H1 (cell line): ENCODE measurements at regions of chr9 and their contacts with region 1.

Region 1: DNA sequence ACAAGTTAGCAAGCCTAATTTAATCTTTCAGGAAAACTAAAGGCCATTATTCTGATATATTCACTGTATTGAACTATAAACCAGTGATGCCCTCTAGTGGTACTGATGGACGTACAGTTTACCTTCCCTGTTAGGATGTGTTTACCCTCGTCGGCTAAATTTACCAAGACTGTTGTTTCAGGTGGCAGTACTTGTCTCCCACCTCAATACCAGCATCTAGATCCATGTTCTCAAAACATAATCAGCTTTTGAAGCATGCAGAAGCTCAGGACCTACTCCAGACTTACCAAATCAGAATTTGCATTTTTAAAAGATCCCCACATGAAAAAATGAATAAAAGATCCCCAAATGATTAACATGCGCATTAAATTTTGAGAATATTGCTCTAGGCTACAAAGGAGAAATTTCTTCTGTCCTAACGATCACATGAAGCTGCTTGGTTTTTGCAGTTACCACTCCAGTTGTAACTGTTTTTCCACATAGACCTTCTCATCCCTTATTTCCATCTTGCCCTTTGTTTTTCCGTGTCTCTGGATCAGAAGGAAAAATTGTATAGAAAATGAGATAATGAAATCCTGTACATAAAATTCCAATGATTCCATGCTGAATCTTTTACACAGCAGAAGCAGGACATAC is 3.2 kb upstream of the BAAT start:
- DNase-seq: no peak
- H3K4me3 ChIP-seq: no peak overlapping the region
- H3K27ac ChIP-seq: no peak overlapping the region
- H3K4me1 ChIP-seq: peaks cover 0 to 3% (median 0%) of the 10 kb centered on the region in 4 experiments; a peak in 3 of 7 replicates
- H3K27me3 ChIP-seq: no peaks in the 10 kb centered on the region
- CTCF ChIP-seq: peak in 2 of 3 experiments; percentile 64 to 77; a peak in 3 of 4 replicates
- EP300 ChIP-seq: no peak
- POLR2A ChIP-seq: no peak
- RAD21 ChIP-seq: peak; percentile 61 to 62

Region 2: GRCh38 chr9:101326501-101326900 is 61.5 kb before region 1 on chr9:
- CTCF ChIA-PET with region 1: interaction called, 17 read pairs
- POLR2A ChIA-PET with region 1: no interaction called
- DNase-seq: no peak
- H3K4me3 ChIP-seq: no peak overlapping the region
- H3K27ac ChIP-seq: no peak overlapping the region
- H3K4me1 ChIP-seq: peaks cover 0 to 6% (median 5%) of the 10 kb centered on the region in 4 experiments; a peak in 5 of 7 replicates
- H3K27me3 ChIP-seq: no peaks in the 10 kb centered on the region
- CTCF ChIP-seq: no peak
- EP300 ChIP-seq: no peak
- POLR2A ChIP-seq: no peak
- RAD21 ChIP-seq: no peak

Region 3: DNA sequence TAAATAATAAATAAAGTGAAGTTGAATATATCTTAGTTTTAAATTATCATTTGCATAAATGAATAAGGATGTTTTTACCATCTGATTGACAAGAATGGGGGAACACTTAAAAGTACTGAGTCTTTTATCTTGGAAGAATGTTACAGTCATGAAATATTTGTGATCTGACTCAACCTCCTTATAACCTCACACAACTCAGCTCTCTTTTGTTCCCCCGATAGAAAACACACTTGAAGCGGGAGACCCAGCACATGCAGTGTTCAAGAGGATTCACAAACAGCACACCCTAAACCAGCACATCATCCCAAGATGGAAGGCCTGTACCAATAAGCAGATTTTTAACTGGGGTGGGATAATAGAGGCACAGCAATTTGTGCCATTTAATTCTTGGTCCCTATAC is 18.7 kb before region 1 on chr9:
- CTCF ChIA-PET with region 1: interaction called, 21 read pairs
- POLR2A ChIA-PET with region 1: interaction called, 4 read pairs
- DNase-seq: no peak
- H3K4me3 ChIP-seq: no peak overlapping the region
- H3K27ac ChIP-seq: no peak overlapping the region
- H3K4me1 ChIP-seq: no peaks in the 10 kb centered on the region; a peak in 1 of 7 replicates
- H3K27me3 ChIP-seq: no peaks in the 10 kb centered on the region
- CTCF ChIP-seq: no peak
- EP300 ChIP-seq: no peak
- POLR2A ChIP-seq: no peak
- RAD21 ChIP-seq: no peak

Region 4: GRCh38 chr9:101398068-101398929 is 10.3 kb after region 1 on chr9 and contains the starts of genes MRPL50 and ZNF189:
- CTCF ChIA-PET with region 1: interaction called, 16 read pairs
- POLR2A ChIA-PET with region 1: interaction called, 15 read pairs
- DNase-seq: peak; percentile 89 to 94
- H3K4me3 ChIP-seq: peak within 1 kb of the TSS; percentile 84 to 93 (median 87)
- H3K27ac ChIP-seq: peak within 1 kb of the TSS; percentile 89
- H3K4me1 ChIP-seq: peaks cover 0 to 4% (median 3%) of the 10 kb centered on the region in 4 experiments; a peak in 3 of 7 replicates
- H3K27me3 ChIP-seq: no peaks in the 10 kb centered on the region
- CTCF ChIP-seq: no peak
- EP300 ChIP-seq: no peak
- POLR2A ChIP-seq: peak; percentile 97 to 98
- RAD21 ChIP-seq: no peak
- total RNA-seq, gene MRPL50: 24.0 and 25.1 TPM in 2 replicates
- total RNA-seq, gene ZNF189: 11.9 and 12.3 TPM in 2 replicates

Region 5: DNA sequence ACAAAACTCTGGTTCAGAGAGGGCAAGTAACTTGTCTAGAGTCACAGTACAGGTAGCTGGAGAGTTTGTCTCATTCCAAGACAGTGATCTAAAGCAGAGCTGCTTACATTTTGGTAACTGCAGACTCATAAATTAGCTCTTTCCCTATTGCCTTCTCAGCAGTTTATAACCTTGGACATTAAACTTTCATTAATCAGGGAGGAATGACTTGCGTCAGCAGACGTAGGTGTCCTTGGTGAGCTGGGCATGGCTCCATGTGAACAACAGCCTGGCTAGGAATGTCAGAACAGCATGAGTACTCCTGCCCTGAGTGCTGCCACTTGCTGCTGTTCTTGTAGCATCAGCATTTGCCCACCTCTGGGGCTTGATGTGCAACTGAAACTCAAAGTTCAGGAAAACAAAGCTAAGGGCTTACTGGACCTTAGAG is 49.8 kb after region 1 on chr9:
- CTCF ChIA-PET with region 1: no interaction called
- POLR2A ChIA-PET with region 1: no interaction called
- DNase-seq: no peak
- H3K4me3 ChIP-seq: no peak overlapping the region
- H3K27ac ChIP-seq: no peak overlapping the region
- H3K4me1 ChIP-seq: no peaks in the 10 kb centered on the region
- H3K27me3 ChIP-seq: no peaks in the 10 kb centered on the region
- CTCF ChIP-seq: no peak
- EP300 ChIP-seq: no peak
- POLR2A ChIP-seq: no peak
- RAD21 ChIP-seq: no peak

Region 6: DNA sequence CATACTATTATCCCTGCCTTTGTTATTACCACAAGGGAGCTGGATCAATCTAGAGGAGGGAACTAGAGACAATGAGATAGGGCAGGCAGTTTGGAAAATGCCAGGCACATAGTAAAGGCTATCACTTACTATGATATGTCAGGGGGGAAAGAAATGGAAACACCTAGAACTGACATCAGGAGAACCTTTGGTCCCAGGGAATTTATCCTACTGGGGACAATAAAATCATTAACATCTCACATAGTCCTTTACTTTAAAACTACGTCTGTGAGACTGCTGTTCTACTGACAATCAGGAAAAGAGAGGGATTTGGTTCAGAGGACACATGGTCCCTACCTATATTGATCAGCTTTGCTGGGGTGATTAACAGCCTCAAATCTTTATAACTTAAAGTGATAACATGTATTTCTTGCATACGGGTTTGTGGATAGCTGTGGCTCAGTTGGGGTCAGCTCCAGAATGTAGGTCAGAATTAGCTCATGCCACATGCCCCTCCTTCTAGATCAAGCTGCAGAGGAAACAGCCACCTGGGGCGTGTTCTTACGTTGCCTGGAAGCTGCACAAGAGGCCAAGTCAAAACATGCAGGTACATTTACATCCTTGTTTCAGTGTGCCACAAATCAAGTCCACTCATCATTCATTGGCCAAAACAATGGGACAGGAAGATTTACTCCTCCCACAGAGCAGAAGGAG is 91.5 kb after region 1 on chr9:
- CTCF ChIA-PET with region 1: no interaction called
- POLR2A ChIA-PET with region 1: no interaction called
- DNase-seq: no peak
- H3K4me3 ChIP-seq: no peak overlapping the region
- H3K27ac ChIP-seq: no peak overlapping the region
- H3K4me1 ChIP-seq: peaks cover 0 to 4% (median 1%) of the 10 kb centered on the region in 4 experiments; a peak in 2 of 7 replicates
- H3K27me3 ChIP-seq: no peaks in the 10 kb centered on the region
- CTCF ChIP-seq: no peak
- EP300 ChIP-seq: no peak
- POLR2A ChIP-seq: no peak
- RAD21 ChIP-seq: no peak